Ovary (tissue), 10 donors: ENCODE measurements at regions of chr1 and their contacts with region 1.

Region 1: DNA sequence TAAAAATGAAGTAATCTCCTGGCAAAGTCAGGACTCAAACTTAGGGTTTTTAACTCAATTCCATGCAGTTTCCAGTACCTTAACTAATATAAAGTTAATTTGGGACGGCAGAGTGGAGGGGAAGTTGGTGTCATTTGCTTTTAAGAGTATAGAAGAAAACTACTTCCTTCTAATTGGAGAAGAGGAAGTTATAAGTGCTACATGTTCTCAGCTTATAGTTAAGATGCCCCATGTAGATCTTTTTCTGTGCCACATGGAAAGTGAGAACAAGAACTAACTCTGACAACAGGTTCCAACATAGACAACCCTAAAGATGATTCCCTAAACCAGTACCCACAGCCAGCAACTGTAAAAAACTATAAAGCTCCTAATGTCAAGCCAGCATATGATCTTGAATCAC is 11.5 kb downstream of the RRAGC start:
- DNase-seq: no peak
- H3K4me3 ChIP-seq: no peak overlapping the region
- H3K27ac ChIP-seq: no peak overlapping the region
- H3K4me1 ChIP-seq: no peaks in the 10 kb centered on the region
- H3K27me3 ChIP-seq: no peaks in the 10 kb centered on the region
- CTCF ChIP-seq: no peak
- EP300 ChIP-seq: no peak
- POLR2A ChIP-seq: no peak

Region 2: DNA sequence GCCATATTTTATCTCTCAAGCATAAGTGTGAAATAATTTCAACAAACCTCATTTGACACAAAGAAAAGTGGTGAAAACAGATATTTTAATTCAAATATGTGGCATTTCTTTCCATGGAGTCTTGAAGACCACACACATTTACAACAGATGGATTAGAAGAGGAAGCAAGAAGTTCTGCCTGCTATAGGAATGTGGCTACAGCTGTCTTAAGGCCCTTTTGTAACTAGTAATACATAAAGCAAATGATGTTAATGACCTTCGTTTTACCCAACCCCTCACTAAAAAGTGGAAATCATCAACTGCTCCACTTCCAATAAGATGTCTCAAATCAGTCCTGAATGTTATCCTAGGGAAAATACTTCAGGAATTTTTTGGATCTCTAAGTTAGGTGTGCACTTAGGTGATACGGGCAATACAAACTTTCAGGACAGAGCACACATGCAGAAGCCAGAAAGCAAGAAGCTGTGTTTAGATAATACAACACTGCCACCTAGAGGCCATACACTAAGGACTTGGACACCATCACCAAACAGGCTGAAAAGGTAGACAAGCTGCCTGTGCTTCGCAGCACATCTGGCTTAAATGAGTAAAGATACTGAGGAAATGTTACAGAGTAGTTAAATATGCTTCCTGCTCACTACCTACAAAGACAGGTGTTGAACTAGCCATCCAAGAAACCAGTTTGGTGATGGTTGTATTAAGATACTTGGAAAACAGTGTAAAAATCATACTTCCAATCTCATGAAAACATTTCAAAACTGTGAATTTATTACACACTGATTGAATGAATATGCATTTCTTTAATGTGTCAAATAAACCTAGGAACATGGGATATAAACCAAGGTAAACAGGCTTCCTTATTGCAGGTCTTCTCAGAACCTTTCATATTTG is 12.9 kb before region 1 on chr1:
- intact Hi-C with region 1: loop called in 1 of 4 experiments (anchors 1 kb)
- DNase-seq: peak in 1 of 5 donors; percentile 37
- H3K4me3 ChIP-seq: no peak overlapping the region
- H3K27ac ChIP-seq: no peak overlapping the region
- H3K4me1 ChIP-seq: no peaks in the 10 kb centered on the region
- H3K27me3 ChIP-seq: no peaks in the 10 kb centered on the region
- CTCF ChIP-seq: peak; percentile 51 to 64 (median 62)
- EP300 ChIP-seq: no peak
- POLR2A ChIP-seq: no peak

Region 3: DNA sequence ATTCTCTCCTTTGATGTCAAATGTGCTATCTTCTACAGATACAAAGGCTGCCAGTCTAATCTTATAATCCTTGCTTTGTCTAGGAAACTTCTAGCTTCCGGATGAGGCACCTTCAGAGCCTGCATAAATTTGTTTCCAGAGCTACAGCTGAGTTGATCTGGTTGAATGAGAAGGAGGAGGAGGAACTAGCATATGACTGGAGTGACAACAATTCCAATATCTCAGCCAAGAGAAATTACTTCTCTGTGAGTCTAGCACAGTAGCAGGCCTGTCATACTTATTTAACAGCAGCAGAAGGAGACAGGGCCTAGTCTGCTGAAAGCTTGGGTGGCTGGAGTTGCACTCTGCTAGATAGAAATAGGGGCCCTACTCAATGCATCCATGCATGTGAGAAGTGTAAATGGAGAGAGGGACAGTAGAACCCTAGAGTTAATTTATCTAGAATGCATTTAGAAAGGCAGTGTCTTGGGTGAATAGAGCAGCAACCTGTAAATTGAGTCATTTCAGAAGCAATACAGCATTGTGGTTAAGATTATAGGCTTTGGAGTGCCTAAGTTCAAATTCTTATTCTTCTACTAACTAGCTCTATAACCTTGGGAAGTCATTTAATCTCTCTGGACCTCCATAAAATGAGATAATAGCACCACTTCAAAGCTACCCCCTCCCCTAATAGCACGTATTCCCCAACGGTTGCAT is 445.5 kb after region 1 on chr1:
- intact Hi-C with region 1: no loop called
- DNase-seq: no peak
- H3K4me3 ChIP-seq: no peak overlapping the region
- H3K27ac ChIP-seq: no peak overlapping the region
- H3K4me1 ChIP-seq: peaks cover 2% of the 10 kb centered on the region
- H3K27me3 ChIP-seq: no peaks in the 10 kb centered on the region
- CTCF ChIP-seq: no peak
- EP300 ChIP-seq: no peak
- POLR2A ChIP-seq: no peak